ENCODE measurements at regions of chr7 and their contacts with region 1.

Region 1: DNA sequence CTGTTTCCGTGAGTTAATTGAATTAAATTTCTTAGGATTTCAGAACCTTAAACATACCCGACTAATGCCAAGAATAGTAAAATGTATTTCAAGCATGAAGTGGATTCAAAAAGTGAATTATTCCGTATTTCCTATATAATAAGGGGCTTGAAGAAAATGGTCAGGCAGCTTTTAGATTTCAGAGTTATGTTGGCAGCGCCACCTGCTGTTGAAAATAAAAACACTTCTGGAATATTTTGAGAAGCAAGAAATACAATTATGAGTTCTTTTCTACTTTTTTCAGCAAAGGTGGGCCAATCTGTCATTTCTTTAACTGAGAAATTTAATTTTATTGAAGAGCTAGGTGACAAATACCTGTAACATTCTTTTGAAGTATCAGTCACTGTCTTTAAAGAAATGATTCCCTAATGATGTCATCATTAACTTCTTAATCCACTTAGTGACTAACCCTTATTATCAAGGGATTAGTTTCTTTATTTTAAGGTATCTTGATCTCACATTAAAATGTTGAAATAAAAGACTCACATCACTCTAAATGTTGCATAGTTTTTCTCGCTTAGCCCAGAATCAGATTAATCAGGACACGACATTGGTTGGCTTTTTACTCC is 36.6 kb upstream of the AGR3 start:
- ATAC-seq: no peak
- H3K4me3 ChIP-seq: no peak overlapping the region
- H3K27ac ChIP-seq: no peak overlapping the region
- H3K4me1 ChIP-seq: peaks cover 8% of the 10 kb centered on the region in 2 donors

Region 2: GRCh38 chr7:16078076-16078952 is 840.1 kb before region 1 on chr7:
- in situ Hi-C with region 1: loop called in 1 of 9 experiments (anchors 25 kb)
- ATAC-seq: peak in 7 of 8 experiments; percentile 50 to 71 (median 57)
- H3K4me3 ChIP-seq: no peak overlapping the region
- H3K27ac ChIP-seq: no peak overlapping the region
- H3K4me1 ChIP-seq: peaks cover 0 to 2% of the 10 kb centered on the region in 2 donors

Region 3: GRCh38 chr7:16695621-16696237 is 222.7 kb before region 1 on chr7:
- in situ Hi-C with region 1: loop called in 2 of 9 experiments (anchors 25 kb)
- ATAC-seq: peak in 7 of 8 experiments; percentile 56 to 87 (median 75)
- H3K4me3 ChIP-seq: no peak overlapping the region
- H3K27ac ChIP-seq: no peak overlapping the region
- H3K4me1 ChIP-seq: peaks cover 4 to 10% of the 10 kb centered on the region in 2 donors

Region 4: GRCh38 chr7:16708980-16709379 is 209.4 kb before region 1 on chr7:
- in situ Hi-C with region 1: loop called in 1 of 9 experiments (anchors 25 kb)
- ATAC-seq: peak in 4 of 8 experiments; percentile 46 to 87 (median 66)
- H3K4me3 ChIP-seq: no peak overlapping the region
- H3K27ac ChIP-seq: no peak overlapping the region
- H3K4me1 ChIP-seq: no peaks in the 10 kb centered on the region

Region 5: GRCh38 chr7:16801111-16801542 is 117.3 kb before region 1 on chr7:
- in situ Hi-C with region 1: loop called in 1 of 9 experiments (anchors 10 kb)
- ATAC-seq: peak in 5 of 8 experiments; percentile 42 to 85 (median 77)
- H3K4me3 ChIP-seq: no peak overlapping the region
- H3K27ac ChIP-seq: no peak overlapping the region
- H3K4me1 ChIP-seq: no peaks in the 10 kb centered on the region

Measured in motor neuron (in vitro differentiated cells).